Heart right ventricle (tissue), 16 donors: ENCODE measurements at regions of chr5 and their contacts with region 1.

Region 1: DNA sequence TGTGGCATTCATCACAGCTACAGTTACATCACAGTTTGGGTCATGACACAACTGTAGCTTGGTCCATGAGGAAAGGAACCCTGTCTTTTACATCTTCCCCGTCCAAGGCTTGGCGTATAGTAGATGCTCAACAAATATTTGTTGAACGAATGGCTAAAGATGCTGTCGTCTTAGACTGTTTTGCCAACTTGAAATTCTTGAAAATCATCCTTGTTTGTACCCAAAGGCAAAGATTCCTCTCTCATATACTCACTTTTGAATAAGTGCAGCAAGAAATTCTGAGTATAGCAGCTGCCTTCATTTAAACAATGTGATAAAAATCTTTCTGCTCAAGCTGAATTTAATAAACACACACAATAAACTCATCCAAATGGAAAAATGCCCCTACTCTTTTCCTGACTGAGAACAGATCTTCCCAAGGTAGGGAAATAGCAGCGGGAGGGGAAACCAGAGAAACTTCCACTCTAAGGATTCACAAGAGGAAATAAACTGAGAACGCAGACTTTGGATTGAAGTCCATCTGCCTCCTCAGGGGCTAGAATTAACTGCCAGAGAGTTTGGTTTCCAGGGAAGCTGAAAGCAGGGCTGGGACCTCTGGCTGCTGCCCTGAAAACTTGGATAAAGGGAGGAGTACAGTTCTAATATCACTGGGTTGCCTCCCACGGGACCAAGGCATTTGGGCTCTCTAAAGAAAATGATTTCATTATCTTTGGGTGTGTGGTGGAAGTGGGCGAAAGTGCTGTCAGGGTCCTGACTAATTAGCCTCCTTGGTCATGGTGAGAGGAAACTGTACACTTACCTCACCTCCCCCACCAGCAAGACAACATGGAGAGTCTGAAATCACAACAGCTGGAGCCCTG is 99.1 kb downstream of the DPYSL3 start:
- DNase-seq: peak in 1 of 2 donors; percentile 41
- ATAC-seq: peak; percentile 48 to 73 (median 64)
- H3K4me3 ChIP-seq: no peak overlapping the region
- H3K27ac ChIP-seq: peak overlapping the region in 5 of 10 donors; percentile 20 to 56 (median 46)
- H3K4me1 ChIP-seq: peaks cover 8 to 43% (median 19%) of the 10 kb centered on the region in 9 donors
- H3K27me3 ChIP-seq: no peaks in the 10 kb centered on the region
- CTCF ChIP-seq: no peak

Region 2: GRCh38 chr5:147346006-147346561 is 64.6 kb before region 1 on chr5:
- intact Hi-C with region 1: no loop called
- DNase-seq: no peak
- ATAC-seq: no peak
- H3K4me3 ChIP-seq: no peak overlapping the region
- H3K27ac ChIP-seq: no peak overlapping the region
- H3K4me1 ChIP-seq: no peaks in the 10 kb centered on the region
- H3K27me3 ChIP-seq: no peaks in the 10 kb centered on the region
- CTCF ChIP-seq: no peak

Region 3: GRCh38 chr5:147446523-147446922 is 35.8 kb after region 1 on chr5:
- intact Hi-C with region 1: loop called in 2 of 10 experiments (anchors 5 kb)
- DNase-seq: peak in 1 of 2 donors; percentile 22
- ATAC-seq: peak; percentile 53 to 86 (median 84)
- H3K4me3 ChIP-seq: no peak overlapping the region
- H3K27ac ChIP-seq: peak overlapping the region in 8 of 10 donors; percentile 5 to 74 (median 40)
- H3K4me1 ChIP-seq: peaks cover 0 to 45% (median 10%) of the 10 kb centered on the region in 9 donors
- H3K27me3 ChIP-seq: peaks cover 0 to 10% (median 0%) of the 10 kb centered on the region in 7 donors
- CTCF ChIP-seq: no peak